Mammary epithelial cell (primary cell): ENCODE measurements at regions of chr12 and their contacts with region 1.

Region 1: DNA sequence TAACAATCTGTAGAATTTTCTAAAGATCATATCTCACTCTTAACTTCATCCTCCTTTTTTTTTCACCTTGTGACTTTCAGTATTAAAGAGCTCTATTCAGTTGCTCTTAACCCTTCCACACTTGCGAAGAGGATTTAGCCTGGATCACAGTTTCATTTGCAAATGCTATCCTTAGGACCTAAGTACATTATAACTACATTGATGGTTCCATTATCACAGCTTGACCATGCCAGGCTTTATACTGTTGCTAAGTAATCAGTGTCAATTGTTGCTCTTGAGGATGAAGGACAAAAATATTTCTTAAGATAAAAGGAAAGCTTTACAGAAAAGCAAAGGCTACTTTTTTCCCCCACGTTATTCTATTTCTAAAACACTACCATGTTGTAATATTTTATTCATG is 122.2 kb downstream of the PDZRN4 start:
- DNase-seq: no peak
- H3K4me3 ChIP-seq: no peak overlapping the region
- H3K27ac ChIP-seq: no peak overlapping the region
- H3K4me1 ChIP-seq: no peaks in the 10 kb centered on the region
- H3K27me3 ChIP-seq: no peaks in the 10 kb centered on the region
- CTCF ChIP-seq: no peak

Region 2: GRCh38 chr12:41344776-41345470 is 34.6 kb after region 1 on chr12:
- CTCF ChIA-PET with region 1: no interaction called
- dilution Hi-C with region 1: no loop called
- in situ Hi-C with region 1: no loop called
- intact Hi-C with region 1: no loop called
- DNase-seq: no peak
- H3K4me3 ChIP-seq: no peak overlapping the region
- H3K27ac ChIP-seq: no peak overlapping the region
- H3K4me1 ChIP-seq: no peaks in the 10 kb centered on the region
- H3K27me3 ChIP-seq: no peaks in the 10 kb centered on the region
- CTCF ChIP-seq: no peak

Region 3: DNA sequence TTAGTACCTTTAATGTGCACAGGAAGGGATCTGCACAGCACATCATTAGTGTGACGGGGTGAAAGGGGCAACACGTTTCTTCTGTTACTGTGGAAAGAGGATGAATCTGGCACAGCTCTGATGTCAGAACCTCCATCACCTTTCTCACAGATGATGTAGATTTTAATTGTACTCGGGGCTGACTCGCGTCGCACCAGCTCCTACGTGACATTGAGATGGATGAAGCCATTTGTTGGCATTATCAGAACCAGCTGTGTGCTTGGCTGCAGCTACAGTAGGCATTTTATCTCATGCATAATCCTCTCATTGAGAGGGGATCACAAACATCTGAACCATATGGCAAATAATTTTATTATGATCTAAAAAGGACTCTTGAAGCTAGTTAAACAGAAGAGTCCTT is 51.4 kb after region 1 on chr12:
- CTCF ChIA-PET with region 1: no interaction called
- dilution Hi-C with region 1: loop called (anchors 5 kb)
- in situ Hi-C with region 1: no loop called
- intact Hi-C with region 1: no loop called
- DNase-seq: no peak
- H3K4me3 ChIP-seq: no peak overlapping the region
- H3K27ac ChIP-seq: no peak overlapping the region
- H3K4me1 ChIP-seq: no peaks in the 10 kb centered on the region
- H3K27me3 ChIP-seq: no peaks in the 10 kb centered on the region
- CTCF ChIP-seq: no peak